CD14-positive monocyte (primary cell): ENCODE measurements at regions of chr1 and their contacts with region 1.

Region 1: GRCh38 chr1:45303582-45304310 is 22.9 kb upstream of the HPDL start:
- DNase-seq: peak; percentile 93 to 97 (median 95)
- H3K4me3 ChIP-seq: peak overlapping the region; percentile 61 to 88 (median 84)
- H3K4me3 Mint-ChIP-seq: peak overlapping the region; percentile 89 to 92
- H3K27ac ChIP-seq: peak overlapping the region; percentile 86 to 88
- H3K27ac Mint-ChIP-seq: peak overlapping the region; percentile 93 to 98 (median 96)
- H3K4me1 ChIP-seq: peaks cover 15 to 18% of the 10 kb centered on the region in 2 donors
- H3K4me1 Mint-ChIP-seq: peaks cover 10% of the 10 kb centered on the region
- H3K27me3 ChIP-seq: no peaks in the 10 kb centered on the region
- H3K27me3 Mint-ChIP-seq: peaks cover 0 to 5% (median 5%) of the 10 kb centered on the region in 3 donors
- CTCF ChIP-seq: peak; percentile 71

Region 2: GRCh38 chr1:44775078-44775929 is 528.4 kb before region 1 on chr1 and contains the start of gene RPS8:
- intact Hi-C with region 1: loop called in 1 of 2 experiments (anchors 5 kb)
- DNase-seq: peak; percentile 88 to 91 (median 90)
- H3K4me3 ChIP-seq: peak within 1 kb of the TSS; percentile 81 to 90 (median 86)
- H3K4me3 Mint-ChIP-seq: peak within 1 kb of the TSS; percentile 92 to 96
- H3K27ac ChIP-seq: peak within 1 kb of the TSS; percentile 86 to 93
- H3K27ac Mint-ChIP-seq: peak within 1 kb of the TSS; percentile 96 to 100 (median 98)
- H3K4me1 ChIP-seq: peaks cover 23 to 31% of the 10 kb centered on the region in 2 donors
- H3K4me1 Mint-ChIP-seq: peaks cover 34% of the 10 kb centered on the region
- H3K27me3 ChIP-seq: no peaks in the 10 kb centered on the region
- H3K27me3 Mint-ChIP-seq: no peaks in the 10 kb centered on the region
- CTCF ChIP-seq: no peak
- polyA plus RNA-seq, gene RPS8: 413 to 1,619 (median 419) TPM

Region 3: DNA sequence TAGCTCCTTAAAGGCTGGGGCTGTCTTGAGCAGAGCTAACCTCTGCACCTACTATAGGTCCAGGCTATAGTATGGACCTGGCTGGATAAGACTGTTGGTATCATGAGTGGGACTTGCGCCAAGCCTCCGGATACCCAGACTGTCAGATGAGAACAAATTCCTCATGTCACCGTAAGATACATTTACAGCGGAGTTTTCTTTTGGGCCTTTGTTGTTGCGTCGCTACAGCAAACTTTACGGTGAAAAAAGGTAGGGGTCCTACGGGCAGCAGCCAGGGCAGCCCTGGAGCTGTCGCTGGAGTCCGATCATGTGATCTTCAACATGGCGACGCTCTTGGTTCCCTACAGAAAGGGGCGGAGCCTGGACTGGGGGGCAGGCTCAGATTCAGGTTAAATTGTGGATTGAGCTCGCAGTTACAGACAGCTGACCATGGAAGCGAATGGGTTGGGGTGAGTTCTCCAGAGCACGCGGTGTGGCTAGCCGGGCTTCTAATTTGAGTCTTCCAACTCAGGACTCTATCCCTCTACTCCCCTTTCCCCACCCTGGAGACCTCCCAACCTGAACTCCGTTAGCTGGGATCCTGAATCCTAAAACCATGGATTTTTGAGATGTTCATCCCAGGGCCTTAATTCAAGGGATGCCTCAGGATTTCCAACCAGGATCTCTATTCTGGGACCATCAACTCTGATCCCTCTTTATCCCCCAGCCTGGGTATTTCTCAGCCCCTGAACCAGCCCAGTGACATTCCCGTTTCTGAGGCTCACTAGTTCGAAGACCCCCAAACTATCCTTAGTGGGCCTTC is 291.7 kb before region 1 on chr1 and contains the start of gene UROD:
- intact Hi-C with region 1: loop called in 1 of 2 experiments (anchors 1 kb)
- DNase-seq: peak; percentile 90 to 93 (median 92)
- H3K4me3 ChIP-seq: peak within 1 kb of the TSS; percentile 77 to 96 (median 90)
- H3K4me3 Mint-ChIP-seq: peak within 1 kb of the TSS; percentile 86 to 89
- H3K27ac ChIP-seq: peak within 1 kb of the TSS; percentile 60 to 83
- H3K27ac Mint-ChIP-seq: peak within 1 kb of the TSS; percentile 72 to 92 (median 88)
- H3K4me1 ChIP-seq: peaks cover 33 to 51% of the 10 kb centered on the region in 2 donors
- H3K4me1 Mint-ChIP-seq: peaks cover 57% of the 10 kb centered on the region
- H3K27me3 ChIP-seq: no peaks in the 10 kb centered on the region
- H3K27me3 Mint-ChIP-seq: no peaks in the 10 kb centered on the region
- CTCF ChIP-seq: no peak
- polyA plus RNA-seq, gene UROD: 98.2 to 115 (median 108) TPM

Region 4: GRCh38 chr1:45067806-45068205 is 235.9 kb before region 1 on chr1:
- intact Hi-C with region 1: no loop called
- DNase-seq: no peak
- H3K4me3 ChIP-seq: no peak overlapping the region
- H3K4me3 Mint-ChIP-seq: no peak overlapping the region
- H3K27ac ChIP-seq: no peak overlapping the region
- H3K27ac Mint-ChIP-seq: no peak overlapping the region
- H3K4me1 ChIP-seq: no peaks in the 10 kb centered on the region
- H3K4me1 Mint-ChIP-seq: no peaks in the 10 kb centered on the region
- H3K27me3 ChIP-seq: no peaks in the 10 kb centered on the region
- H3K27me3 Mint-ChIP-seq: peaks cover 0 to 3% (median 2%) of the 10 kb centered on the region in 3 donors
- CTCF ChIP-seq: no peak

Region 5: DNA sequence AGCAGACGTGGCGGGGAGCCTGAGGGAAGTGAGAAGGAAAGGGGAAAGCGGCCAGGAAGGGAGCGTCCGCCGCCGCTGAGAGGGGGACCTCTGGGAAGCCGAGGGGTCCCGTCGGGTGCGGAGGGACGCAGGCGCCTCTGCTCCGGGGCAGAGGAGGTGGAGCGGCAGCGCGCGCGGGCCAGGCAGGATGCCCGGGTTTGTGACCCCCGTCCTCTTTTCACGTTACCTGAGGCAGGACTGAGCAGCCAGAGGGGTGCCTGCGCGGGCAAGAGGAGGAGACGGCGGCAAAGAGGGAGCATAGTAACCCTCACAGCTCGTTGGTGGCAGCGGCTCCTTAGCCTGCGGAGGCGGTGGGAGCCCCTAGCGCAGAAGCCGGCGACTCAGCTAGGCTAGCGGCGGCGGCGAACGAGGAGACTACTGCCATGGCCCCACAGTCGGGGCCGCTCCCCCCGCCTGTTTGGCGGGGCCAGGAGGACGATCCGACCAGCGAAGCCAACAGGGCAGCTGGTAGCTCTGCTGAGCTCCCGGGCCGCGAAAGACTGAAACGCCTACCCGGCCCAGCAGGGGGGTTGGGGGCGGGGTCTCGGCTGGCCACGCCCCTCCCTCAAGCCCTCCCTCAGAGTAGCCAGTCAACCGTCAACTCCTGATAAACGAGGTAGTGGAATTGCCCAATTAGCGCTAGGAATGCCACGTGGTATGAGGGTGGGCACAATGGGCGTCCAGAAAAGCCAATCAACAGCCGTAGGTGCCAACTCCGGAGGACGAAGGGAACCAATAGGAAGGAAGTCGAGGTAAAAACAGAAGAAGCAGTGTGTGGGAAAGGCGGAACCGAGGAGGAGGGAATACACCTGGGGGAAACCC is 187.1 kb after region 1 on chr1 and contains the start of gene TESK2:
- intact Hi-C with region 1: loop called in 1 of 2 experiments (anchors 2 kb)
- DNase-seq: peak; percentile 99 to 100 (median 99)
- H3K4me3 ChIP-seq: peak within 1 kb of the TSS; percentile 72 to 99 (median 97)
- H3K4me3 Mint-ChIP-seq: no peak within 1 kb of the TSS
- H3K27ac ChIP-seq: peak within 1 kb of the TSS; percentile 52 to 76
- H3K27ac Mint-ChIP-seq: peak within 1 kb of the TSS in 1 of 7 donors; percentile 21
- H3K4me1 ChIP-seq: peaks cover 23 to 28% of the 10 kb centered on the region in 2 donors
- H3K4me1 Mint-ChIP-seq: peaks cover 5% of the 10 kb centered on the region
- H3K27me3 ChIP-seq: no peaks in the 10 kb centered on the region
- H3K27me3 Mint-ChIP-seq: peaks cover 0 to 3% (median 3%) of the 10 kb centered on the region in 3 donors
- CTCF ChIP-seq: no peak
- polyA plus RNA-seq, gene TESK2: 3.9 to 13.1 (median 4.1) TPM